ENCODE measurements at regions of chr14 and their contacts with region 1.

Region 1: GRCh38 chr14:102316743-102317563 is 2.6 kb upstream of the ZNF839 start:
- DNase-seq: peak; percentile 97
- H3K4me3 ChIP-seq: peak overlapping the region; percentile 38 to 55 (median 48)
- H3K27ac ChIP-seq: peak overlapping the region; percentile 87 to 96 (median 96)
- H3K4me1 ChIP-seq: peaks cover 0 to 51% (median 42%) of the 10 kb centered on the region in 4 donors
- H3K27me3 ChIP-seq: no peaks in the 10 kb centered on the region
- CTCF ChIP-seq: peak; percentile 74 to 88 (median 78)
- EP300 ChIP-seq: no peak
- POLR2A ChIP-seq: no peak

Region 2: DNA sequence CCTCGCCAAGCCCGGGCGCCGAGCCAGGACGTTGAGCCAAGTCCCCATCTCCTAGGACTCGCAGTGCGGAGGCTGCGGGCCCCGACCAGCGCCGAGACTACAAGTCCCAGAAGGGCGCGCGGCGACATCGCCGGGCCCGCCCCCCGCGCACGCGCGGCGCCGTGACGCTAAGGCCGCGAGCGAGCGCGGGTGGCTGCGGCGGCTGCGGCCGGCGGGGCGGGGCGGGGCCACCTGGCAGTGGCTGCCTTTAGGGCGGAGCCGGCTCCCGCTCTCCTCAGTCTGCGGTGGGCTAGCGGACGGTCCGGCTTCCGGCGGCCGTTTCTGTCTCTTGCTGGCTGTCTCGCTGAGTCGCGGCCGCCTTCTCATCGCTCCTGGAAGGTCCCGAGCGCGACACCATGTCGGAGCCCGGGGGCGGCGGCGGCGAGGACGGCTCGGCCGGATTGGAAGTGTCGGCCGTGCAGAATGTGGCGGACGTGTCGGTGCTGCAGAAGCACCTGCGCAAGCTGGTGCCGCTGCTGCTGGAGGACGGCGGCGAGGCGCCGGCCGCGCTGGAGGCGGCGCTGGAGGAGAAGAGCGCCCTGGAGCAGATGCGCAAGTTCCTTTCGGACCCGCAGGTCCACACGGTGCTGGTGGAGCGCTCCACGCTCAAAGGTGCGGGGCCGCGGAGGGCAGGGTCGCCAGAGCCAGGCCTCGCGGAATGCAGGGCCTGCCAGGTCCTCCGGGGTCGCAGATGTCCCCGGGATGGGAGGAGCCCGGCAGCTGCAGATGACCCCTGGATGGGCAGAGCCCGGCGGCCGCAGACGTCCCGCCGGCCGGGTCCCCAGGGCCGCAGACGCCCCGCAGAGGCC is 352.4 kb before region 1 on chr14 and contains the start of gene DYNC1H1:
- intact Hi-C with region 1: loop called (anchors 10 kb)
- DNase-seq: peak; percentile 99
- H3K4me3 ChIP-seq: peak within 1 kb of the TSS; percentile 89 to 100 (median 92)
- H3K27ac ChIP-seq: peak within 1 kb of the TSS; percentile 88 to 100 (median 96)
- H3K4me1 ChIP-seq: peaks cover 0 to 62% (median 43%) of the 10 kb centered on the region in 4 donors
- H3K27me3 ChIP-seq: no peaks in the 10 kb centered on the region
- CTCF ChIP-seq: no peak
- EP300 ChIP-seq: no peak
- POLR2A ChIP-seq: peak; percentile 95 to 96
- total RNA-seq, gene DYNC1H1: 320 to 592 (median 485) TPM

Region 3: GRCh38 chr14:102046343-102047278 is 270.3 kb before region 1 on chr14:
- intact Hi-C with region 1: loop called (anchors 5 kb)
- DNase-seq: peak; percentile 93
- H3K4me3 ChIP-seq: no peak overlapping the region
- H3K27ac ChIP-seq: peak overlapping the region; percentile 28 to 67 (median 39)
- H3K4me1 ChIP-seq: peaks cover 0 to 23% (median 11%) of the 10 kb centered on the region in 4 donors
- H3K27me3 ChIP-seq: no peaks in the 10 kb centered on the region
- CTCF ChIP-seq: peak in 3 of 4 experiments; percentile 35 to 50 (median 39)
- EP300 ChIP-seq: no peak
- POLR2A ChIP-seq: no peak

Region 4: DNA sequence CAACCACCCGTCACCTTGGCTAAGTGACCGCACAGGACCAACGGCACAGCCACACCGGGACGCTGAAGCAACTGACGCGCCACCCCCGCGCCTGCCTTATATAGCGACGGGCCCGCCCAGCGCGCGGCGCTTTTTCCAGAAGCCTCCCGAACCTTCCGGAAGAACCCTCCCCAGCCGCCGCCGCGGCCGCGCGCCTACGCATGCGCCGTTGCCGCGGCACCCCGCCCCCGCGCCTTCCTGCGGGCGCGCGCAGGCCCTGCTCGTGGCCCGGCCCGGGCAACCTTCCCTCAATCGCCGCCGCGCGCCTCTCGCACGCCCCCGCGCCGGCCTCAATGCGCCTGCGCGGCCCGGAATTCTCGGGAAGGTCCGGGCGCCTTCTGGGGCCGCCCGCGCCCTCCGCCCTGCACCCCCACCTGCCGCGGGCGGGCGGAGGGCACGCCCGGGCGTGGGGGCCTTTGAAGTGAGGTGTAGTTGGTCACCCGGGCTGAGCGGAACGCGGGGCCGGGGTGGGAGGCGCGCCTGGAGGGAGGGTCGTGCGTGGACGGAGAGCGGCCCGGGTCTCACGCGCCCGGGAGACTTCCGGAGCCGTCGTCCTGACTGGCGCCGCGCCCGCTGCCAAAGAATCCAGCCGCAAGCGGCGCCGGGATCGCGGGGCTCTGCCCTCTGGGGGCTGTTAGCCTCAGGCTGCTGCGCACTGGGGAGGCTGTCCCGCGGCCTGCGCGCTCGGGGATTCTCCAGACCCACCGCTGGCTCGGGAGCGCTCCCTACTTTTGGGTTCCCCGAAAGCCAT is 229.8 kb before region 1 on chr14 and contains the start of gene HSP90AA1:
- intact Hi-C with region 1: loop called (anchors 2 kb)
- DNase-seq: peak; percentile 97
- H3K4me3 ChIP-seq: peak within 1 kb of the TSS; percentile 91 to 99 (median 94)
- H3K27ac ChIP-seq: peak within 1 kb of the TSS; percentile 99 to 100 (median 100)
- H3K4me1 ChIP-seq: peaks cover 2 to 50% (median 47%) of the 10 kb centered on the region in 4 donors
- H3K27me3 ChIP-seq: no peaks in the 10 kb centered on the region
- CTCF ChIP-seq: peak in 2 of 4 experiments; percentile 15 to 24
- EP300 ChIP-seq: peak in 1 of 4 donors; percentile 32
- POLR2A ChIP-seq: peak; percentile 98
- total RNA-seq, gene HSP90AA1: 252 to 463 (median 333) TPM

Region 5: DNA sequence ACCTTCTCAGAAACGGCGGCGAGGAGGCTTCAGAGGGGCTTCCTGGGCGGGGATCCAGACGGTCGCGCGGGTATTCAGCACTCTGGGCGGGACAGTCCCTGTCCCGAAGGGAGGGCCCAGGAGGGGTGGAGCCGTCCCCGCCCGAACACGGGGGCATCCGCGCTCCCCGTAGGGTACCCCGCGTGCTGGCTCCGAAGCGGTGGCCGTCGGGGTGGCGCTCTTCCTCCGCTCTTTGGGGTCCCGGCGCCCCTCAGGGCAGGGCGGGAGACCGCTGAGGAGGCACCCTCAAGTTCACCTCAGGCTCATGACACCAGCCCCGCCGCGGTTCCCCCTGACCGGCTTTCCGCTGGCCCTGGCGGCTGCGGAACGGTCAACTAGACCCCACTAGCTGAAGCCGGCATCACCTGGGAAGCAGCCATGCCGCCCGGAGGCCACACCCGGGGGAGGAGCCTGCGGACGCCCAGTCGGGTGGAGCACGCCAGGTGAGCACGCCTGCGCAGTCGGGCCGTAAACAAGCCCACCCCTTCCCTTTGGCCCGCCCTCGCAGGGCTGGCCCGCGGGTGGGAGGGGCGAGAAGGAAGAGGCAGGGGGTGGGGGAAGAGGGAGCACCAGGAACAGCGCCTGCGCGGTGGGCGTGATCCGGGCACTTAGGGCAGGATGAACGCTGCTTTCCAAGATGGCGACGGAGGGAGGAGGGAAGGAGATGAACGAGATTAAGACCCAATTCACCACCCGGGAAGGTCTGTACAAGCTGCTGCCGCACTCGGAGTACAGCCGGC is 177.5 kb before region 1 on chr14 and contains the start of gene WDR20:
- intact Hi-C with region 1: loop called (anchors 5 kb)
- DNase-seq: peak; percentile 98
- H3K4me3 ChIP-seq: peak within 1 kb of the TSS; percentile 70 to 97 (median 96)
- H3K27ac ChIP-seq: peak within 1 kb of the TSS; percentile 77 to 86 (median 85)
- H3K4me1 ChIP-seq: peaks cover 0 to 31% (median 21%) of the 10 kb centered on the region in 4 donors
- H3K27me3 ChIP-seq: no peaks in the 10 kb centered on the region
- CTCF ChIP-seq: no peak
- EP300 ChIP-seq: peak in 1 of 4 donors; percentile 17
- POLR2A ChIP-seq: peak in 1 of 2 donors; percentile 40
- total RNA-seq, gene WDR20: 19.1 to 32.1 (median 27.3) TPM

Region 6: GRCh38 chr14:102235275-102235897 is 81.6 kb before region 1 on chr14:
- intact Hi-C with region 1: loop called (anchors 1 kb)
- DNase-seq: peak; percentile 94
- H3K4me3 ChIP-seq: peak overlapping the region in 2 of 4 donors; percentile 16 to 18
- H3K27ac ChIP-seq: peak overlapping the region in 1 of 4 donors; percentile 39
- H3K4me1 ChIP-seq: peaks cover 0 to 9% (median 0%) of the 10 kb centered on the region in 4 donors
- H3K27me3 ChIP-seq: no peaks in the 10 kb centered on the region
- CTCF ChIP-seq: peak; percentile 61 to 81 (median 78)
- EP300 ChIP-seq: no peak
- POLR2A ChIP-seq: no peak

Region 7: DNA sequence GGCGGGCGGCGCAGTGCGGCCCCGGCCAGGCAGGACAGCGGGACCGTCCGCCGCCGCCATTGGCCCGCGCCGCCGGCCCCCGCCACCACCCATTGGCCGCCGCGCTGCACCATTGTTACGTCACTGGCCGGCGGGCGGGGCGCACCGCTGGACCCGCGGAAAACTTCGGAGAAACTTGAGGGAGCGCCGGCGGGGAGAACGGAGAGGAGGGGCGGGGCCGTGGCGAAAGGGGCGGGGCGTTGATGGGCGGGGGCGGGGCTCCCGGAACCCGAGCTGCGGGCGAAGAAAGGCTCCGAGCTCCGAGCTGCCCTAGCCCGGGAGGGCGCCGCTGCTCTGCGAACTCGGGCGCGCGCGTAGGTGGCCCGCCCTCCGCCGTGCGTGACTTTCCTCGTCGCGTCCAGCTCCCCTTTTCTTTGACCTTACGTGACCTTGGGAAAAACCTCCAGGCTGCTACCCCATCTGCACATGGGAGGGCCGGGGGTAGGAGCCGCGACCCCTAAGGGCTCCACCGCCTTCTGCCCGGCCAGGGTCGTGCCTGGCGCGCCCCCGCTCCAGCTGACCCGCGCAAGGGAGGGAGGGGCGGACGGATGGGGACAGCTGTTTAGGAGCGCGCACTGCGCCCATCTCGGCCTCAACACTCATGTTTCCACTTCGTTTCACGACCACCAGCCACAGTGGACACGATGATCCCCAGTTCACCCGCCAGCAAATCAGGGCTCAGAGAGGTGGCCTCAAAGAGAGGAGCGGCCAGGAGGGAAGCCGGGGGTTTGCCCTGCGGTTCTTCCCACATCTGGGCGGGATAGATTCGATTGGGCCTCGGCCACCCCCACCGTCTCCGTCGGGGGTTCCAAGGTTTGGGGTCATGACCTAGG is 193.0 kb after region 1 on chr14 and contains the start of gene ANKRD9:
- intact Hi-C with region 1: loop called (anchors 5 kb)
- DNase-seq: peak; percentile 98
- H3K4me3 ChIP-seq: peak within 1 kb of the TSS; percentile 48 to 70 (median 62)
- H3K27ac ChIP-seq: peak within 1 kb of the TSS; percentile 88 to 92 (median 90)
- H3K4me1 ChIP-seq: peaks cover 0 to 19% (median 14%) of the 10 kb centered on the region in 4 donors
- H3K27me3 ChIP-seq: no peaks in the 10 kb centered on the region
- CTCF ChIP-seq: no peak
- EP300 ChIP-seq: no peak
- POLR2A ChIP-seq: peak; percentile 11 to 70
- total RNA-seq, gene ANKRD9: 16.1 to 36.0 (median 23.4) TPM

Region 8: GRCh38 chr14:104206281-104206904 is 1889.4 kb after region 1 on chr14:
- intact Hi-C with region 1: no loop called
- DNase-seq: no peak
- H3K4me3 ChIP-seq: no peak overlapping the region
- H3K27ac ChIP-seq: no peak overlapping the region
- H3K4me1 ChIP-seq: no peaks in the 10 kb centered on the region
- H3K27me3 ChIP-seq: no peaks in the 10 kb centered on the region
- CTCF ChIP-seq: no peak
- EP300 ChIP-seq: no peak
- POLR2A ChIP-seq: no peak